ENCODE measurements at regions of chr10 and their contacts with region 1.

Region 1: GRCh38 chr10:34637418-34637911 is 177.6 kb downstream of the PARD3 start:
- DNase-seq: peak; percentile 66
- H3K4me3 ChIP-seq: no peak overlapping the region
- H3K27ac ChIP-seq: no peak overlapping the region
- H3K4me1 ChIP-seq: peaks cover 8% of the 10 kb centered on the region
- CTCF ChIP-seq: peak; percentile 97

Region 2: GRCh38 chr10:33193057-33193700 is 1444.3 kb before region 1 on chr10:
- CTCF ChIA-PET with region 1: no interaction called
- POLR2A ChIA-PET with region 1: no interaction called
- intact Hi-C with region 1: loop called (anchors 5 kb)
- DNase-seq: peak; percentile 78
- H3K4me3 ChIP-seq: no peak overlapping the region
- H3K27ac ChIP-seq: no peak overlapping the region
- H3K4me1 ChIP-seq: peaks cover 4% of the 10 kb centered on the region
- CTCF ChIP-seq: peak; percentile 92

Region 3: GRCh38 chr10:33330543-33331378 is 1306.7 kb before region 1 on chr10:
- CTCF ChIA-PET with region 1: no interaction called
- POLR2A ChIA-PET with region 1: no interaction called
- intact Hi-C with region 1: loop called (anchors 1 kb)
- DNase-seq: peak; percentile 67
- H3K4me3 ChIP-seq: no peak overlapping the region
- H3K27ac ChIP-seq: no peak overlapping the region
- H3K4me1 ChIP-seq: no peaks in the 10 kb centered on the region
- CTCF ChIP-seq: peak; percentile 99

Region 4: GRCh38 chr10:34156781-34157425 is 480.6 kb before region 1 on chr10:
- CTCF ChIA-PET with region 1: no interaction called
- POLR2A ChIA-PET with region 1: no interaction called
- intact Hi-C with region 1: no loop called
- DNase-seq: no peak
- H3K4me3 ChIP-seq: no peak overlapping the region
- H3K27ac ChIP-seq: no peak overlapping the region
- H3K4me1 ChIP-seq: no peaks in the 10 kb centered on the region
- CTCF ChIP-seq: no peak

Region 5: GRCh38 chr10:34522546-34522945 is 114.9 kb before region 1 on chr10:
- CTCF ChIA-PET with region 1: no interaction called
- POLR2A ChIA-PET with region 1: no interaction called
- intact Hi-C with region 1: loop called (anchors 1 kb)
- DNase-seq: peak; percentile 52
- H3K4me3 ChIP-seq: no peak overlapping the region
- H3K27ac ChIP-seq: no peak overlapping the region
- H3K4me1 ChIP-seq: peaks cover 3% of the 10 kb centered on the region
- CTCF ChIP-seq: peak; percentile 80

Region 6: DNA sequence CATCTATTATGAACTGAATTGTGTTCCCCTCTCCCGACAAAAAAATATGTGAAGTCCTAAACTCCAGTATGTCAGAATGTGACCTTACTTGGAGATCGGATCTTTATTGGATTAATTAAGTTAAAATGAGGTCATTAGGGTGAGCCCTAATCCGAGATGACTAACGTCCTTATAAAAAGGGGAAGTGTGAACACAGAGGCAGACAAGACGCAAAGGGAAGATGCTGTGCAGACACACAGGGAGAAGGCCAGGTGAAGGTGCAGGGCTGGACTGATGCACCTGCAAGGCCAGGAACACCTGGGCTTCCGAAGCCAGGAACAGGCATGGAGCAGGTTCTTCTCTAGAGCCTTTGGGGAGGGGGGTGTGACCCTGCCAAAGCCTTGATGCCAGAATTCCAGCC is 10.1 kb before region 1 on chr10:
- CTCF ChIA-PET with region 1: no interaction called
- POLR2A ChIA-PET with region 1: no interaction called
- intact Hi-C with region 1: no loop called
- DNase-seq: no peak
- H3K4me3 ChIP-seq: no peak overlapping the region
- H3K27ac ChIP-seq: no peak overlapping the region
- H3K4me1 ChIP-seq: no peaks in the 10 kb centered on the region
- CTCF ChIP-seq: no peak

Region 7: DNA sequence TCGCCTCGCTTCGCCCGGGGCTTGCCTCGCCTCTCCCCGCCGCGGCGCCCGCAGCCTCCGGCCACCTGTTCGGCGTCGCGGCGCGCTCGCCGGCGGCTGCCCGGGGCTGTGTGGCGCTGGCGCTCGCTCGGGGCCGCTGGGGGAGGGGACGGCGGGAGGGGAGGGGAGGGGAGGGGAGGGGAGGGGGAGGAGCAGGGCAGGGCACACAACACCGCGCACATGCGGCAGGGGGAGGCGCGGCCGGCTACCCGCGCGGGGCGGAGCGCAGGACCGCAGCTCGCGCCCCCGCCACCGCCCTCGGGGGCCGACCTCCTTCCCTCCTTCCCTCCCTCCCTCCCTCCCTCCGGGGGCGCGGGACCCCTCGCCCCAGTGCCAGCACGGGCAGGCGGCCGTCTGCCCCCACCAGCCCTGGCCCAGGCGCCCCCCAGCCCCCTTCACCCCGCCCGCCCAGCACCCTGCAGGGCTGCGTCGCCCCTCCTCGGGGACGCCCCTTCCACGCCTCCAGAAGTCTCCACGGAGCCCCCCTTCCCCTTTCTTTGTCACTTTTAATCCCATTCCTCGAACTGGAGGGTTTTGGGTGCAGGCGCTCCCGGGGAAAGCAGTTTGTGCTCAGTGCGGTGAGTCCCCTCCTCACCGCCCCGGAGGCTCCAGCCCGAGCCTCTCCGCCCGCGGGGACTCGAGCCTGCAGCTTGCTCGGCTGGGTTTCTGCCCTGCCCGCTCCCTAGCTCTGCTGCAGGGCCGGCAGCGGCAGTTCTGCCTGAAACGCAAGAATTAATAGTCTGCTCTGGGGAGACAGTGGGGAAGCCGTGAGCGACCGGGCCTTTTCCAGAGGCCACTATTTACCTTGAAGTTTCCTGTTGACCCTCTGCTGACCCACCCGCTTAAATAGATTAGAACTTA is 178.0 kb after region 1 on chr10 and contains the start of gene PARD3:
- CTCF ChIA-PET with region 1: no interaction called
- POLR2A ChIA-PET with region 1: no interaction called
- intact Hi-C with region 1: no loop called
- DNase-seq: no peak
- H3K4me3 ChIP-seq: no peak within 1 kb of the TSS
- H3K27ac ChIP-seq: no peak within 1 kb of the TSS
- H3K4me1 ChIP-seq: no peaks in the 10 kb centered on the region
- CTCF ChIP-seq: no peak
- total RNA-seq, gene PARD3: not detected in 2 replicates

Measured in OCI-LY7 (cell line).